Left ventricle myocardium inferior (tissue), 1 donor: ENCODE measurements at regions of chr2 and their contacts with region 1.

Region 1: DNA sequence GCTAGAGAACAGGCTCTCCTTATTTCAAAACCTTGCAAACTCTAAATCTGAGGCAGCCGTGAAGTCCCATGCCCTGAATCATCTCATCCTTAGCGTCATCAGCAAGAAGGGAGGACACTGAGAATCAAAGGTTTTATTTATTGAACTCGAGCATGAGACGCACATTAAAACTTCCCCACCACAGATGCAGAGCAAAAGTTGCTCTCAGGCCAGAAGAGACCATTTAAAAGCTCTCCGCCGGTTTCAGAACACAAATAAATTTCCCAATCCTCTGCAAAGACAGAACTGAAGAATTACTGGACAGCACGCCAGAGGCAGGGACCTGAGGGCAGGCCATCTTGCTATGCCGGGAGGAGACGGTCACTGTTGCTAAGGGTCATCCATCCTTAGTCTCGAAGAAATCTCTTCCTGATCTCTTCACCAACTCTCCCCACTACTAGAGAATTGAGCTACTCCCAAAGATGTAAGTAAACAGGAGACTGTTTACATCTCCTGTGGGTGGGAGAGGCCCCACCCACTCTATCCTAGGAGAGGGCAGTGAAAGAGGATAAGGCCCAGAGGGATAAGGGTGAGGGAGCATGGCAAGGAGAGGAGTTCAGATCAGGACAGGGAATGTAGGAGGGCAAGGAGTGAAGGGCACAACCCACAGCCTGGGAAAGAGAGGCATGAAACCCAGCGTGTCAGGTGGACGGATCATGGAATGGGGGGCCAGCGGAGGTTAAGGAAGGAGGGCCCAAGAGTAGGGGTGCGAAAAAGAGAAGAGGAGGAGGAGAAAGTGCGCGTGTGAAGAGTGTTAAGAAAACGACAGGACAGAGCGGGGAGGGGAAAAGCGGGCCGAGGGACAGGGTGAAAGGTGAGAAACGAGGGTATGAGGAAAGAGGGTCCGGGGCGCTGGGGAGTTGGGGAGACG is 1.1 kb downstream of the AMMECR1L start:
- DNase-seq: no peak
- H3K4me3 ChIP-seq: peak overlapping the region; percentile 80
- H3K27ac ChIP-seq: peak overlapping the region; percentile 96
- H3K4me1 ChIP-seq: peaks cover 62% of the 10 kb centered on the region
- H3K27me3 ChIP-seq: no peaks in the 10 kb centered on the region
- CTCF ChIP-seq: no peak

Region 2: GRCh38 chr2:128090945-128091725 is 206.4 kb after region 1 on chr2 and contains the start of gene UGGT1:
- intact Hi-C with region 1: loop called (anchors 10 kb)
- DNase-seq: peak; percentile 93
- H3K4me3 ChIP-seq: peak within 1 kb of the TSS; percentile 95
- H3K27ac ChIP-seq: peak within 1 kb of the TSS; percentile 88
- H3K4me1 ChIP-seq: peaks cover 32% of the 10 kb centered on the region
- H3K27me3 ChIP-seq: no peaks in the 10 kb centered on the region
- CTCF ChIP-seq: no peak
- total RNA-seq, gene UGGT1: 30.3 TPM